Heart left ventricle (tissue), 16 donors: ENCODE measurements at regions of chr5 and their contacts with region 1.

Region 1: GRCh38 chr5:16666883-16667398 is 50.1 kb upstream of the RETREG1 start:
- DNase-seq: peak; percentile 56 to 79 (median 70)
- ATAC-seq: peak; percentile 52 to 86 (median 83)
- H3K4me3 ChIP-seq: peak overlapping the region in 1 of 12 donors; percentile 14
- H3K27ac ChIP-seq: peak overlapping the region in 10 of 12 donors; percentile 15 to 56 (median 43)
- H3K4me1 ChIP-seq: peaks cover 0 to 44% (median 28%) of the 10 kb centered on the region in 12 donors
- H3K27me3 ChIP-seq: no peaks in the 10 kb centered on the region
- CTCF ChIP-seq: peak; percentile 14 to 60 (median 48)
- POLR2A ChIP-seq: no peak

Region 2: GRCh38 chr5:16345454-16345853 is 321.5 kb before region 1 on chr5:
- intact Hi-C with region 1: loop called in 1 of 10 experiments (anchors 10 kb)
- DNase-seq: no peak
- ATAC-seq: no peak
- H3K4me3 ChIP-seq: no peak overlapping the region
- H3K27ac ChIP-seq: no peak overlapping the region
- H3K4me1 ChIP-seq: no peaks in the 10 kb centered on the region
- H3K27me3 ChIP-seq: no peaks in the 10 kb centered on the region
- CTCF ChIP-seq: peak in 3 of 12 donors; percentile 10 to 31 (median 18)
- POLR2A ChIP-seq: no peak

Region 3: DNA sequence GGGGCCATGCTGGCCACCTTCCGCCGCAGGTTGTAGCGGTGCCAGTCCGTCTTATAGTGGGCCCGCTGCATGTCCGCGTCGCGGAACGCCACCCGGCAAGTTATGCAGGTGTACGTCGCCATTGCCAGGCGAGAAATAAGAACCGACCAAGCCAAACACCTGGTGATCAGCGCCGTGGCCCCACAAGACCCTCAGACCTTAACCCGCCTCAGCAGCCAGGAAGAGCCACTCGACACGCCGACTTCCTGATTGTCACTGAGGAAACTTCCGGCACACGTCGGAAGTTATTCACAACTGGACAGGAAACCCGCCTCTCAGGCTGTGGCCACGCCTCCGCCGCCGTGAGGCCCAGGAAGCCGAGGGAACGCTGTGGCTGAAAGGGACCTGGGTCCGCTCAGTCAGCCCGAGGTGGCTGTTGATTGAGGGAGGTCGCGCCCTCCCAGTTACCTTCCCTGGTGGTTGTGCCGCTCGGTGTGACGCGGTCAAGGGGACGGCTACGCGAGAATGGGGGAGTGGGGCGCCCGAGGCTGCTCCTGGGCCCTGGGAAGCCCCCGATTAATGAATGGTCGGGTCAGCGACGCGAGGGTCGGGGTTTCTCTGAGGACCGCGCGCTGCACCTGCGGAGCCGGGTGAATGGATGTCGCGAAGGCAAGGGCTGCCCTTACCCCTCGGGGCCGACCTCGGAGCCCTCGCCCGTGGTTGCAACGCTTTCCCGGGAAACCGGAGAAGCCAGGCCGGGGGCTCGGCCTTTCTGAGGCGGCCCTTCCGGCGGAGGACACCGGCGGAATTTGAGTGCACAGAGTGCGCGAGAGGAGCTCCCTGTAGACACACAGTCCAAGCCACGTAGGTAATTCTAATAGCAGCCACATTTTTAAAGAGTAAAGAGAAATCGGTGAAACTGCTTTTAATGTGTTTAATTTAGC is 201.1 kb before region 1 on chr5 and contains the start of gene ZNF622:
- intact Hi-C with region 1: loop called in 2 of 10 experiments (anchors 5 kb)
- DNase-seq: peak; percentile 91 to 96 (median 93)
- ATAC-seq: peak; percentile 81 to 93 (median 92)
- H3K4me3 ChIP-seq: peak within 1 kb of the TSS; percentile 81 to 97 (median 90)
- H3K27ac ChIP-seq: peak within 1 kb of the TSS; percentile 86 to 97 (median 92)
- H3K4me1 ChIP-seq: peaks cover 4 to 85% (median 61%) of the 10 kb centered on the region in 12 donors
- H3K27me3 ChIP-seq: no peaks in the 10 kb centered on the region
- CTCF ChIP-seq: no peak
- POLR2A ChIP-seq: peak; percentile 31 to 90
- total RNA-seq, gene ZNF622: 43.7 to 97.3 (median 58.4) TPM

Region 4: DNA sequence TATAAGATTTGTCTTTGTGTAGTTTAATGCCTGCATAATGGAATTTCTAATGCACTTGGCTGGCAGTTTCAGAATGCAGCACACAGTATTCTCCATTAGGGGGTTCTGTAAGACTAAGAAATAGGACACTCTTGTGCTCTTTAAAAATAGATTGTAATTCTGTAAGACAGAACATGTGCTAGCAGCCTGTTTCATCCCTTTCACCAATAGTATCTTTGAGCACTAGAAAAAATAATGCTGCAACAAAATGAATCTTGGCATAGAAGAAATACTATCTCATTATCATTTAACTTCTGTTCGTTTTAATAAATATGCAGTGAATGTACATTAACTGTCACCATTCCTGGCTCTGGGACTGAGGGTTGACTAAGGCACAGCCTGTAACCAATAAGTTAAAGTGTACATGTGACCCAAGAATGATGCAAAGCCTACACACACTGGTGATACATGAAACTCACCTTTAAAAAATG is 177.6 kb before region 1 on chr5:
- intact Hi-C with region 1: loop called (anchors 2 to 10 kb)
- DNase-seq: no peak
- ATAC-seq: peak; percentile 56 to 75 (median 72)
- H3K4me3 ChIP-seq: no peak overlapping the region
- H3K27ac ChIP-seq: peak overlapping the region in 9 of 12 donors; percentile 11 to 82 (median 78)
- H3K4me1 ChIP-seq: peaks cover 0 to 56% (median 20%) of the 10 kb centered on the region in 12 donors
- H3K27me3 ChIP-seq: no peaks in the 10 kb centered on the region
- CTCF ChIP-seq: peak; percentile 18 to 83 (median 70)
- POLR2A ChIP-seq: no peak

Region 5: GRCh38 chr5:16552666-16553343 is 114.1 kb before region 1 on chr5:
- intact Hi-C with region 1: loop called in 6 of 10 experiments (anchors 1 to 10 kb)
- DNase-seq: peak; percentile 74 to 87 (median 78)
- ATAC-seq: peak; percentile 87 to 93 (median 90)
- H3K4me3 ChIP-seq: no peak overlapping the region
- H3K27ac ChIP-seq: peak overlapping the region in 7 of 12 donors; percentile 2 to 73 (median 29)
- H3K4me1 ChIP-seq: peaks cover 0 to 33% (median 6%) of the 10 kb centered on the region in 12 donors
- H3K27me3 ChIP-seq: no peaks in the 10 kb centered on the region
- CTCF ChIP-seq: peak; percentile 55 to 88 (median 74)
- POLR2A ChIP-seq: no peak

Region 6: DNA sequence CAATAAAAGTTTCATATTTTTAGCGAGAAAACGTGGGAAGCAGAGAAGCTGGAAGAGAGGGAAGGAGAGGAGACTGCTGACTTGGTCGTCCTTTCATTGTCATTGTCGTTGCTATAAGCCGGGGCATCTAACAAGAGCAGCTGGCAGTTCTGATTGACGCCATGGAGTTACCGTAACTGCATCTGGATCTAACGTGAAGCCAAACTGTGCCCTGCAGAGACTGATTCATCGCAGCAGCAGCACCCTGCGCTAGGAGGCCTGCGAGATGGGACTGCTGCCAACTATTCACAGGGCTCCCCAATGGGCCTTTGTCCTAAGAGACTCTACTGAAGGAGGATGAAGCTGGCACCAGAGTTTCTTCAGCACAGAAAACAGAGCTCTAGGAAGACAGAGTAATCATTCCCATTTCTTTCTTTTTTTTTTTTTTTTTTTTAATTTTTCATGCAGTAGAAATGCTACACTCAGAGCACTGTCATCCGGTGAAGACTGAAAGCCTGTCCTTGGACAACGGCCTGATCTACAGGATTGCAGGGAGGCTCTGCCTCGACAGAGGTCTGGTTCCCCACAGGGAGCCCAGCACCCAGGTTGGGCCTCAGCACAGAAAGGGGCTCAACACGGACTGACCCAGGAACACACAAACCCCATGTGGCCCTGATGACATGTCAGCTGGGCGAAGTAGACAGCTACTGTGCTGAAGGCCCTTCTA is 97.9 kb before region 1 on chr5:
- intact Hi-C with region 1: loop called in 1 of 10 experiments (anchors 10 kb)
- DNase-seq: peak in 2 of 5 donors; percentile 62 to 85
- ATAC-seq: peak in 3 of 4 donors; percentile 19 to 81 (median 77)
- H3K4me3 ChIP-seq: no peak overlapping the region
- H3K27ac ChIP-seq: peak overlapping the region in 3 of 12 donors; percentile 44 to 69 (median 62)
- H3K4me1 ChIP-seq: peaks cover 0 to 25% (median 9%) of the 10 kb centered on the region in 12 donors
- H3K27me3 ChIP-seq: no peaks in the 10 kb centered on the region
- CTCF ChIP-seq: no peak
- POLR2A ChIP-seq: no peak

Region 7: GRCh38 chr5:16626663-16627264 is 40.2 kb before region 1 on chr5:
- intact Hi-C with region 1: no loop called
- DNase-seq: no peak
- ATAC-seq: peak in 1 of 4 donors; percentile 22
- H3K4me3 ChIP-seq: peak overlapping the region in 1 of 12 donors; percentile 32
- H3K27ac ChIP-seq: peak overlapping the region in 3 of 12 donors; percentile 38 to 71 (median 61)
- H3K4me1 ChIP-seq: peaks cover 0 to 24% (median 3%) of the 10 kb centered on the region in 12 donors
- H3K27me3 ChIP-seq: no peaks in the 10 kb centered on the region
- CTCF ChIP-seq: no peak
- POLR2A ChIP-seq: no peak

Region 8: DNA sequence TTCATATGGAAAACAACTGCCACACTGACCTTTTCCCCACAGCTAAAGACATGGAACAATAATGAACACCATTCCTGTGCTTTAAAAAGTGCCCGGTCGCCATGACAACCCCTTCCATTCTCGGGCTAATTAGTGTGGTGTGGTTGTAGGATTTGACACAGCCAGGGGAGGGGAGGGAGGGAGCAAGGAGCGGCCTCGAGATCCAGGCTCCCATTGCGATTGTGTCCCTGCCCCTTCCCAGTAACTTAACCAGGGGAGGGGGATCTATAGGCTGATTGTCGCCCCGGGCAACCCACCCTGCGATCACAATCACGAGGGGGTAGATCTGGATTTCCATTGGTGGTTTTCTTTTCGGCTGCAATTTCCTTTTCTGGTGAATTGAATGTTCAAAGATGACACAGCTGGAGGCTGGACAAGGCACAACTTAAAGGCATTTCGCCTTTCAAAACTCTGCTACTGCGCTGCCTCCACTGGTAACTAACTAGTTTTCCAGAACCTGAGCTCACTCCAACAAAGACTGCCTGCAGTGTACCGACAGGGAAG is 46.5 kb after region 1 on chr5:
- intact Hi-C with region 1: no loop called
- DNase-seq: no peak
- ATAC-seq: peak in 2 of 4 donors; percentile 33 to 57
- H3K4me3 ChIP-seq: peak overlapping the region in 9 of 12 donors; percentile 22 to 49 (median 38)
- H3K27ac ChIP-seq: no peak overlapping the region
- H3K4me1 ChIP-seq: peaks cover 0 to 16% (median 0%) of the 10 kb centered on the region in 12 donors
- H3K27me3 ChIP-seq: no peaks in the 10 kb centered on the region
- CTCF ChIP-seq: no peak
- POLR2A ChIP-seq: no peak